B cell (primary cell): ENCODE measurements at regions of chr16 and their contacts with region 1.

Region 1: GRCh38 chr16:2267913-2268666 is at the start of gene RNPS1:
- DNase-seq: peak; percentile 100
- ATAC-seq: peak; percentile 89
- H3K4me3 ChIP-seq: peak within 1 kb of the TSS; percentile 71 to 88 (median 85)
- H3K4me3 Mint-ChIP-seq: peak within 1 kb of the TSS; percentile 96
- H3K27ac ChIP-seq: peak within 1 kb of the TSS; percentile 79 to 91
- H3K27ac Mint-ChIP-seq: peak within 1 kb of the TSS; percentile 99
- H3K4me1 ChIP-seq: peaks cover 18 to 28% of the 10 kb centered on the region in 2 donors
- H3K4me1 Mint-ChIP-seq: peaks cover 47% of the 10 kb centered on the region
- H3K27me3 ChIP-seq: no peaks in the 10 kb centered on the region
- H3K27me3 Mint-ChIP-seq: no peaks in the 10 kb centered on the region
- CTCF ChIP-seq: no peak
- total RNA-seq, gene RNPS1: 209 and 210 TPM in 2 replicates

Region 2: GRCh38 chr16:1826691-1827575 is 441.2 kb before region 1 on chr16 and contains the starts of genes FAHD1 and HAGH:
- CTCF ChIA-PET with region 1: no interaction called
- POLR2A ChIA-PET with region 1: no interaction called
- intact Hi-C with region 1: loop called (anchors 5 kb)
- DNase-seq: peak; percentile 98
- ATAC-seq: peak; percentile 84
- H3K4me3 ChIP-seq: peak within 1 kb of the TSS; percentile 70 to 95 (median 74)
- H3K4me3 Mint-ChIP-seq: peak within 1 kb of the TSS; percentile 98
- H3K27ac ChIP-seq: peak within 1 kb of the TSS; percentile 38 to 81
- H3K27ac Mint-ChIP-seq: peak within 1 kb of the TSS; percentile 96
- H3K4me1 ChIP-seq: peaks cover 25% of the 10 kb centered on the region in 2 donors
- H3K4me1 Mint-ChIP-seq: peaks cover 44% of the 10 kb centered on the region
- H3K27me3 ChIP-seq: no peaks in the 10 kb centered on the region
- H3K27me3 Mint-ChIP-seq: no peaks in the 10 kb centered on the region
- CTCF ChIP-seq: no peak
- total RNA-seq, gene FAHD1: 11.0 and 13.3 TPM in 2 replicates
- total RNA-seq, gene HAGH: 49.7 and 50.6 TPM in 2 replicates

Region 3: GRCh38 chr16:2047330-2048115 is 220.6 kb before region 1 on chr16 and contains the starts of genes NTHL1 and TSC2:
- CTCF ChIA-PET with region 1: no interaction called
- POLR2A ChIA-PET with region 1: no interaction called
- intact Hi-C with region 1: loop called (anchors 5 kb)
- DNase-seq: peak; percentile 95
- ATAC-seq: peak; percentile 97
- H3K4me3 ChIP-seq: peak within 1 kb of the TSS; percentile 27 to 79 (median 78)
- H3K4me3 Mint-ChIP-seq: peak within 1 kb of the TSS; percentile 91
- H3K27ac ChIP-seq: peak within 1 kb of the TSS in 1 of 2 donors; percentile 63
- H3K27ac Mint-ChIP-seq: peak within 1 kb of the TSS; percentile 76
- H3K4me1 ChIP-seq: peaks cover 17 to 35% of the 10 kb centered on the region in 2 donors
- H3K4me1 Mint-ChIP-seq: peaks cover 20% of the 10 kb centered on the region
- H3K27me3 ChIP-seq: no peaks in the 10 kb centered on the region
- H3K27me3 Mint-ChIP-seq: no peaks in the 10 kb centered on the region
- CTCF ChIP-seq: peak; percentile 26
- total RNA-seq, gene NTHL1: 14.1 and 17.5 TPM in 2 replicates
- total RNA-seq, gene TSC2: 188 and 194 TPM in 2 replicates

Region 4: DNA sequence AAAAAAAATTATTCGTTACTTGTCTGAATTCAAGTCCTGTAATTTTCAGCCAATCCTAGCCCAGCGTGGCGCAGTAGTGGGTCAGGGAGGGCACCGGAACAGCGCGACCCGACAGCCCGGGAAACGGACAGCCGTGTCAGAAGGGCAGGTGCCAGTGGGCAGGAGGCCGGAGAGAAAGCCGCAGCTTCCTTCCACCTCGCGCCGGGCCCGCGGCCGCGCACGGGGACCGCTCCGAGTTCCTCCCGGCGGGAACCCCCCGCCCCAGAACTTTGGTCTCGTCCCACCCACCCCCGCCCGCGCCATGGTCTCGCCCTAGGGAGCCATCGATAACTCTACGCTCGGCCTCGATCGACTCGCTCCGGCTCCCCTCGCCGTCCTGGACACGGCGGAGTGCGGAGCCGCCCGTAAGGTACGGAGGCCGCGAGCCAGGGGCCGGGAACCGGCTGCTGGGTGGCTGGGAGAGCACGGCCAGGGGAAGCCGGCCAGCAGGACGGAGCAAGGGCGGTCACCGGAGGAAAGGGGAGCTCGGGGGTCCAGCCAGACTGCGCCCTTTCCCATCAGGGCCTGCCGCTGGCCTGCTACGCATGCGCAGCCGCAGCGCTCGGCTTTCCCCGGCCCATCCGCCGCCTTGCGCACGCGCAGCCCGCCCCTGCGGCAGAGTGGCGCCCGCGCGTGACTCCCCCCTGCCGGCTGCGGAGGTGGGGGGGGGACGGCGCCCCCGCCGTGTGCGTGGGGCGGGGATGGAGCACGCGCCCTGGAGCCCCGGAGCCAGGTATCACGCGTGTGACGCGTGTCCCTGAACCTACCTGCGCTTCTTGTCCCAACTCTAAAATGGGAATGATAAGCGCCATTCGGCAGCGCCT is 62.8 kb before region 1 on chr16 and contains the start of gene MLST8:
- CTCF ChIA-PET with region 1: no interaction called
- POLR2A ChIA-PET with region 1: interaction called, 5 read pairs
- intact Hi-C with region 1: loop called (anchors 1 kb)
- DNase-seq: peak; percentile 98
- ATAC-seq: peak; percentile 90
- H3K4me3 ChIP-seq: peak within 1 kb of the TSS; percentile 73 to 94 (median 76)
- H3K4me3 Mint-ChIP-seq: peak within 1 kb of the TSS; percentile 87
- H3K27ac ChIP-seq: peak within 1 kb of the TSS; percentile 86 to 89
- H3K27ac Mint-ChIP-seq: peak within 1 kb of the TSS; percentile 94
- H3K4me1 ChIP-seq: peaks cover 12 to 22% of the 10 kb centered on the region in 2 donors
- H3K4me1 Mint-ChIP-seq: peaks cover 21% of the 10 kb centered on the region
- H3K27me3 ChIP-seq: no peaks in the 10 kb centered on the region
- H3K27me3 Mint-ChIP-seq: peaks cover 3% of the 10 kb centered on the region
- CTCF ChIP-seq: peak; percentile 32
- total RNA-seq, gene MLST8: 36.1 and 39.0 TPM in 2 replicates

Region 5: DNA sequence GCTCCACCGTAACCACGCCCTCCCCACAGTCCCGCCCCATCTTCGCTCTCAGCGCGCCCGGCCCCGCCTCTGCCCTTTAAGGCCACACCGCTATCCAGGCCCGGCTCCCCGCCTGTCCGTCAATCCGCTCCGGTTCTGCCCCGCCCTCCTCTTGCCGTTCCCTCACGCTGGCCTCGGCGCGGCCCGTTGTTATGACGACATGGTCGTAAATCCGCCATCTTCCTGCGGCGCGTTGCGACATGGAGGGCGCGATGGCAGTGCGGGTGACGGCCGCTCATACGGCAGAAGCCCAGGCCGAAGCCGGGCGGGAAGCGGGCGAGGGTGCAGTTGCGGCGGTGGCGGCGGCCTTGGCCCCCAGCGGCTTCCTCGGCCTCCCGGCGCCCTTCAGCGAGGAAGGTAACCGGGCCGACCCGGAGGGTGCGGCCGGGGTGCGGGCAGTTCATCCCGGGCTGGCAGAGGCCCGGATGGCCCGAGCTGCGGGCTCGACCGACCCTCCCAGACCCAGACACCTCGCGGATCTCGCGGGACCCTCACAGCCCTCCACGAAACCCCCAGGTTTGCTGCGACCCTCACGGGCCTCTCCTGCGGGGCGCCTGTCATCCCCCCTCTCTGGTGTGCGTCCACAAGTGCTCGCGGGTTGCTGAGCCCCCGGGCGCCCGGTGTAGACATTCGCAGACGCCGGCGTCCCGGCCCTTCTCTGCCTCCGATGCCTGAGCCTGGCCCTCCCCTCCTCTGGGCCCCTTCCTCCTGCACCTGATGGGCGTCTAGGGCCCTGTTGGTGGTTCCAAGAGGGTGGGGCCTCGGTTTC is 44.5 kb before region 1 on chr16 and contains the start of gene E4F1:
- CTCF ChIA-PET with region 1: no interaction called
- POLR2A ChIA-PET with region 1: no interaction called
- intact Hi-C with region 1: loop called (anchors 1 kb)
- DNase-seq: peak; percentile 100
- ATAC-seq: peak; percentile 99
- H3K4me3 ChIP-seq: peak within 1 kb of the TSS; percentile 51 to 92 (median 82)
- H3K4me3 Mint-ChIP-seq: peak within 1 kb of the TSS; percentile 86
- H3K27ac ChIP-seq: peak within 1 kb of the TSS; percentile 47 to 85
- H3K27ac Mint-ChIP-seq: peak within 1 kb of the TSS; percentile 86
- H3K4me1 ChIP-seq: peaks cover 6 to 16% of the 10 kb centered on the region in 2 donors
- H3K4me1 Mint-ChIP-seq: peaks cover 25% of the 10 kb centered on the region
- H3K27me3 ChIP-seq: no peaks in the 10 kb centered on the region
- H3K27me3 Mint-ChIP-seq: no peaks in the 10 kb centered on the region
- CTCF ChIP-seq: no peak
- total RNA-seq, gene E4F1: 41.8 and 43.0 TPM in 2 replicates

Region 6: GRCh38 chr16:2340564-2341455 is 72.7 kb after region 1 on chr16 and contains the start of gene ABCA3:
- CTCF ChIA-PET with region 1: no interaction called
- POLR2A ChIA-PET with region 1: no interaction called
- intact Hi-C with region 1: loop called (anchors 1 kb)
- DNase-seq: peak; percentile 96
- ATAC-seq: peak; percentile 83
- H3K4me3 ChIP-seq: peak within 1 kb of the TSS; percentile 17 to 69 (median 58)
- H3K4me3 Mint-ChIP-seq: peak within 1 kb of the TSS; percentile 86
- H3K27ac ChIP-seq: no peak within 1 kb of the TSS
- H3K27ac Mint-ChIP-seq: peak within 1 kb of the TSS; percentile 90
- H3K4me1 ChIP-seq: peaks cover 15 to 19% of the 10 kb centered on the region in 2 donors
- H3K4me1 Mint-ChIP-seq: peaks cover 12% of the 10 kb centered on the region
- H3K27me3 ChIP-seq: peaks cover 0 to 22% (median 3%) of the 10 kb centered on the region in 4 experiments
- H3K27me3 Mint-ChIP-seq: no peaks in the 10 kb centered on the region
- CTCF ChIP-seq: peak; percentile 100
- total RNA-seq, gene ABCA3: 5.1 and 5.4 TPM in 2 replicates